Right ventricle myocardium superior (tissue), 1 donor: ENCODE measurements at regions of chr14 and their contacts with region 1.

Region 1: GRCh38 chr14:33839193-33840076 is 111.4 kb downstream of the EGLN3 start:
- DNase-seq: peak; percentile 46
- ATAC-seq: peak; percentile 91

Region 2: GRCh38 chr14:33726685-33727084 is 112.8 kb before region 1 on chr14:
- intact Hi-C with region 1: no loop called
- DNase-seq: no peak
- ATAC-seq: no peak

Region 3: DNA sequence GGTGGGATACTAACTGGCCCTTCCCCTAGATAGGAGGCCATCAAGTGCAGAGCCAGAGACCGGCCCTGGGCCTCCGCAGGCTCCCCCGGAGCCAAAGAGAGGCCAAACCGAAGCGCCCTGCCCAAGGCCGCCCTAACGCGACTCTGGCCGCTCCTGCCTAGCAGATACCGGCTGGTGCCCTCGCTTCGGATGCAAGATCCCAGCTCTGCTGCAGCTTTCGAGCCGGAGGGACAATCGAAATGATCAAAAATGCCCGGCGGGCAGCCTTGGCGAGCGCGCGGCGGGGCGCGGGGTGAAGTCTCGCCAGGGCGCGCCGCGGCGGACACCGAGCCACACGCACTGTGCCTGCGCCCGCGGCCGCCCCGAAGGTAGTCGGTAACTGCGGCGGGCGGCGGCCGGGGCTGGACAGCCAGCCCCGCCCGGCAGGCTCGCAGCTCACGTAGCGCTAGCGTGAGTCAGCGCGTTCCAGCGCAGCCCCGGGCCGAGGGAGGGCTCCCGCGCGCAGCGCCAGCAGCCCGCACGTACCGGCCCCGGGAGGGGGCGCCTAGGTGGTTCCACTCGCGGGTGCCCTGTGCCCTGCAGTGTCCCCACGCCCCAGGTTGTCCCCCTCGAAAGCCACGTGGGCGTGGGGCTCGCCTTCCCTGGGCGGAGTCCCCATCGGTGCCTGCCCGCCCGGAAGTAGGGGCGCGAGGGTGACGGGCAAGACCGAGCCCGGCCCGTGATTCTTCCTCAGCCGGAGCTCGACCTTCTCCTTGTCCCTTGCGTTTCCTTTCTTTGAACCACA is 220.6 kb after region 1 on chr14:
- intact Hi-C with region 1: no loop called
- DNase-seq: peak; percentile 90
- ATAC-seq: peak; percentile 95

Region 4: DNA sequence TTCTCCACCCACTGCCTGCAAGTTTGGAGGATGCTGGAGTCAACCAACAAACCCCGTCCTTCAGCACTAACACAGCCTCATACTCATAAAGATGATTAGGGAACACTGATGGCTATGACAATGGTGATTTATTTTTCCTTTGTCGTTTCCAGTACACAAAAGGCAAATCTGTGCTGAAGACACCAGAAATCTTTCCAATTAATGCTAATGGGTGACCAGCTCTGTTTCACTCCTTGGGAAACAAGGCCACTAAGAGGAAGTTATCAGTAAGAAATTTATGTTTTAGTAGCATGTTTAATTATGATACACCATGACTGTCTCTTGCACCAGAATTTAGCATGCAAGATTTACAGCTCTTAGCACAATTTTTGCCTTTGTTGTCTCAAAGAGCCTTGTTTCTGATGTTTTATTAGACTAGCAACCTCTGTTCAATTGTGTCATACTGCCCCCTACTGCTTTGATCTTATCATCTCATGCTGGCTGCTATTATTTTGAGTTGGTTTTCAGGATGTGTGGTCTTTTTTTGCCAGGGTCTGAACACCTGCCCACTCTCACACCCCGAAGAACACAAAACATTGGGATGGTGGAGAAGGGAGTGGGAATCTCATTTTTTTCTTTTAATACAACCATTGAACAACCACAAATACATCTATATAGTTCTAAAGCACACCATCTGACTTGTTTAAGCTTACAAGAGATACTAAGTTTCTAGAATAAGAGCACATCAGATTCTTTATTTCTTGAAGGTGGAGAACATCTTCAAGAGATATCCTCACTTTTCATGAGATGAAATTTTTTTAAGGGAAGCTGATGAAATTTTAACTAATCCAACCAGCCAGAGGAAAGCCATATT is 461.7 kb after region 1 on chr14:
- intact Hi-C with region 1: loop called (anchors 5 kb)
- DNase-seq: no peak
- ATAC-seq: peak; percentile 39